H1 (cell line): ENCODE measurements at regions of chr3 and their contacts with region 1.

Region 1: DNA sequence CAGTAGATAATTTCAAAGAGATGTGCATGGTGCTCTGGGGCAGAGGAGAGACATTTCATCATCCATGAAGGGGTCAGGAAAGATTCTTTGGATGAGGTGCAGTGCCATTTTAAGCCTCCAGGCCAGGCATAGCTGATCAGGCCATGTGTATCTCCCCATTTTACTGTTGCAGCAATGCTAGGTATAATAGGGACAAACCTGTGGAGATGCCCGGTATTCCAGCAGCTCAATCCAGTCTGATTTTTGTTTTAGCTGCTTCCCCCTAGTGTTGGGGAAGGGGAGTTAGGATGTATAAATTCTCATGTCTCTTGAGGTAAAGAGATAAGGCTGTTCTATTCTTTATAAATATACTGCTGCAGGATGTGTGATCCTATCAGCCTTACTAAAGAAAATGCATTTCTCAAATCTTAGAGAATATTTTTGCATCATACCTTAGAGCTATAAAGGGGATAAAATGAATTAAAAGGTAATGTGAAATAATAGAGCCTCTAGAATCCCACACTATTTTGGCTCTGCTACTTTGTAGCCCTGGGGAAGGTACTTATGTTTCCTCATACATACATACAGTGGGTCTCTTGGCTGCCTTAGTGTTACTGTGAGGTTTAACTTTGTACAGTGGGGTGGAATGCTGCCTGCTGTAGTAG is 5.2 kb downstream of the CDV3 start:
- DNase-seq: no peak
- H3K4me3 ChIP-seq: no peak overlapping the region
- H3K27ac ChIP-seq: no peak overlapping the region
- H3K4me1 ChIP-seq: peaks cover 0 to 2% (median 0%) of the 10 kb centered on the region in 4 experiments; a peak in 3 of 7 replicates
- H3K27me3 ChIP-seq: no peaks in the 10 kb centered on the region
- CTCF ChIP-seq: peak in 2 of 3 experiments; percentile 57 to 67; a peak in 3 of 4 replicates
- EP300 ChIP-seq: no peak
- POLR2A ChIP-seq: peak in 1 of 2 experiments; percentile 42; a peak in 1 of 3 replicates
- RAD21 ChIP-seq: peak; percentile 52 to 59

Region 2: GRCh38 chr3:133426721-133427120 is 151.9 kb before region 1 on chr3:
- CTCF ChIA-PET with region 1: no interaction called
- POLR2A ChIA-PET with region 1: no interaction called
- DNase-seq: no peak
- H3K4me3 ChIP-seq: no peak overlapping the region
- H3K27ac ChIP-seq: no peak overlapping the region
- H3K4me1 ChIP-seq: no peaks in the 10 kb centered on the region
- H3K27me3 ChIP-seq: no peaks in the 10 kb centered on the region
- CTCF ChIP-seq: no peak
- EP300 ChIP-seq: no peak
- POLR2A ChIP-seq: no peak
- RAD21 ChIP-seq: no peak

Region 3: GRCh38 chr3:133457465-133458067 is 121.1 kb before region 1 on chr3:
- CTCF ChIA-PET with region 1: interaction called, 17 read pairs
- POLR2A ChIA-PET with region 1: interaction called, 8 read pairs
- DNase-seq: no peak
- H3K4me3 ChIP-seq: no peak overlapping the region
- H3K27ac ChIP-seq: no peak overlapping the region
- H3K4me1 ChIP-seq: peaks cover 0 to 10% (median 3%) of the 10 kb centered on the region in 4 experiments; a peak in 2 of 7 replicates
- H3K27me3 ChIP-seq: no peaks in the 10 kb centered on the region
- CTCF ChIP-seq: peak in 2 of 3 experiments; percentile 16 to 25; a peak in 2 of 4 replicates
- EP300 ChIP-seq: no peak
- POLR2A ChIP-seq: no peak
- RAD21 ChIP-seq: peak; percentile 15 to 23; a peak in 2 of 4 replicates

Region 4: DNA sequence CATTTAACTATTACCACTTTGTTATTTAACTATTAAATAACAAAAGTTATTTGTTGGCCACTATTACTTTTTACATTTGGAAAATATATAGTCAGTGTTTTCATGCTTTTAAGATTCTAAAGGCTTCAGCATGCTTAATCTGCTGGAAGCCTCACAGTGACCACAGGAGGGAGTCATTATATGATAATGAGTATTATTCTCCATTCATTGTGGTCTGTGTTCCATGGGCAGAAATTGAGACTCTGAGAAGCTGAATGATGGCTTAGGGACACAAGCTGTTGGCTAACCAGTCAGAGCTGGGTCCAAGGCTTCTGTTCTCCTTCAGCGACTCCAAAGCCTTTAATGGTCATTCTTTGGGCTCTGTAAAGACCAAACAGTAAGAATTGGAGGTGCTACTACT is 114.1 kb before region 1 on chr3:
- CTCF ChIA-PET with region 1: interaction called, 11 read pairs
- POLR2A ChIA-PET with region 1: no interaction called
- DNase-seq: no peak
- H3K4me3 ChIP-seq: no peak overlapping the region
- H3K27ac ChIP-seq: no peak overlapping the region
- H3K4me1 ChIP-seq: peaks cover 0 to 10% (median 3%) of the 10 kb centered on the region in 4 experiments; a peak in 2 of 7 replicates
- H3K27me3 ChIP-seq: no peaks in the 10 kb centered on the region
- CTCF ChIP-seq: no peak
- EP300 ChIP-seq: no peak
- POLR2A ChIP-seq: no peak
- RAD21 ChIP-seq: no peak

Region 5: DNA sequence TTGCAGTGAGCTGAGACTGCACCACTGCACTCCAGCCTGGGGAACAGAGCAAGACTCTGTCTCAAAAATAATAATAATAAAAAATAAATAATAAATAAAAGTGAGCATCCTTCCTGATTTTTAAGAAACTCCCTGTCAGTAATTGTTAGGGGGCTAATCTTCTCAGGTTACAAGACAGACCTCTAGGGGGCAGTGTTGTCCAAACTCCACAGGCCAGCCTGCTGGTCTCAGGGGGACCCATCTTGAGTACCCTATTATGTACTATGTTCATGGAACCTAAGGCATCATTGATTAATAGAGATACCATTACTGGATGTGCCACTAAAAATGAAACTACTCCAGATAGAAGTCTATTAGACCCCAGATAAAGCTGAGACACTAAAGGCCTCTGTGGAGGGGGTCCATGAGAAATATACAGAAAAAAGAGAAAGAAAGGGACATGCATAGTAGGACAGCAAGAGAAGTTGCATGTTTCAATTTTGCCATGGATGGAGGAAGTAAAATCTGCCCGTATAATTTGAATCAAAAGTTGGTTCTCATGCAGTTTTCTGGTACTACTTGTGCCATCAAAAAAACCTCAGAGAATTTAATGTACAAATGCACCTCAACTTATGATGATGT is 90.6 kb before region 1 on chr3:
- CTCF ChIA-PET with region 1: interaction called, 30 read pairs
- POLR2A ChIA-PET with region 1: interaction called, 9 read pairs
- DNase-seq: no peak
- H3K4me3 ChIP-seq: no peak overlapping the region
- H3K27ac ChIP-seq: no peak overlapping the region
- H3K4me1 ChIP-seq: peaks cover 2 to 9% (median 3%) of the 10 kb centered on the region in 4 experiments
- H3K27me3 ChIP-seq: no peaks in the 10 kb centered on the region
- CTCF ChIP-seq: peak; percentile 47 to 57 (median 50)
- EP300 ChIP-seq: no peak
- POLR2A ChIP-seq: no peak
- RAD21 ChIP-seq: peak; percentile 62 to 72

Region 6: GRCh38 chr3:133521946-133522345 is 56.7 kb before region 1 on chr3:
- CTCF ChIA-PET with region 1: interaction called, 11 read pairs
- POLR2A ChIA-PET with region 1: no interaction called
- DNase-seq: no peak
- H3K4me3 ChIP-seq: no peak overlapping the region
- H3K27ac ChIP-seq: no peak overlapping the region
- H3K4me1 ChIP-seq: no peaks in the 10 kb centered on the region
- H3K27me3 ChIP-seq: no peaks in the 10 kb centered on the region
- CTCF ChIP-seq: no peak
- EP300 ChIP-seq: no peak
- POLR2A ChIP-seq: no peak
- RAD21 ChIP-seq: no peak

Region 7: DNA sequence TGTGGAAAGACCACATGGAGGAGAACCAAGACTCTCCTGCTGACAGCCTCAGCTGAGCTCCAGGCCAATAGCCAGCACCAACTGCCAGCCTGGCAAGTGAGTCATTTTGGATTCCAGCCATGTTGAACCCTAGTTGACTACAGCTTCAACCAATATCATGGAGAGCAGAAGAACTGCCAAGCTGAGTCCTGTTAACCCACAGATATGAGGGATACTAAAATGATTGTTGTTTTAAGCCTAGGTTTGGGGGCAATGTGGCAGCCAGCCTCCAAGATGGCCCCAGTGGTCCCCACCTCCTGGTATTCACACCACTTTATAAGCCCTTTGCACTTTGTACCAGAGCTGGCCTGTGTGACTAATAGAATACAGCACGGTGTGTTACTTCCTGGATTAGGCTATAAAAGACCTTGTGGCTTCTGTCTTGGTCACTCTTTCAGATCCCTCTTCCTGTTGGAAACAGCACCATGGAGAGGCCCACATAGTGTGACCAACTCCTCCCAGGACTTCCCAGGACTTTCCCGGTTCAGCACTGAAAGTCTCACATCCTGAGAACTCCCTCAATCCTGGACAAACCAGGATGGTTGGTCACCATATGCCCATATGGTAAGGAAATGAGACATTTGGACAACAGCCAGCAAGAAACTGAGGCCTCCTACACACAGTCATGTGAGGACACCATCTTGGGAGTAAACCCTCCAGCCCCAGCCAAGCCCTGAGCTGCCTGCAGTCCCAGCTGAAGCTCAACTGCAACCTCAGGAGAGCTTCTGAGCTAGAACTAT is 37.6 kb before region 1 on chr3:
- CTCF ChIA-PET with region 1: interaction called, 11 read pairs
- POLR2A ChIA-PET with region 1: interaction called, 3 read pairs
- DNase-seq: no peak
- H3K4me3 ChIP-seq: no peak overlapping the region
- H3K27ac ChIP-seq: no peak overlapping the region
- H3K4me1 ChIP-seq: no peaks in the 10 kb centered on the region
- H3K27me3 ChIP-seq: no peaks in the 10 kb centered on the region
- CTCF ChIP-seq: no peak
- EP300 ChIP-seq: no peak
- POLR2A ChIP-seq: no peak
- RAD21 ChIP-seq: no peak

Region 8: DNA sequence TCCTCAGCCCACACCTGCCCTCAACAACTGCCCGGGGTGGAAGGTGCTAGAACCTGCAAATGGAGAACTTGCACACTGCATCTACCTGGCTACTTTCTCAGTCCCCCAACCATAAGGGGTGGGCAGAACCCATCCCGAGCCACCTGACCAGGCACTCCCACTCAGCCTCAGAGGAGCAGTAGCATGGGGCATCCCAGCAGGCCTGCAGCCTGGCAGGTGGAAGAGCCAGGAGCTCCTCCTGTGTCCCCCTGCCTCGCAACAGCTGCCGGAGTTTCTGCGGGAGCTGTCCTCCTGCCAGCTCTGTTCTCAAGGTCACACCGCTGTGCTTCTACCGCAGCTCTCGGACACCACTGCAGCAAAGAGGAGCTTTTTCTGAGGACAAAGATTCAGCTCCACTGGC is 289.5 kb after region 1 on chr3:
- CTCF ChIA-PET with region 1: no interaction called
- POLR2A ChIA-PET with region 1: no interaction called
- DNase-seq: no peak
- H3K4me3 ChIP-seq: no peak overlapping the region
- H3K27ac ChIP-seq: no peak overlapping the region
- H3K4me1 ChIP-seq: peaks cover 0 to 3% (median 0%) of the 10 kb centered on the region in 4 experiments; a peak in 3 of 7 replicates
- H3K27me3 ChIP-seq: no peaks in the 10 kb centered on the region
- CTCF ChIP-seq: no peak
- EP300 ChIP-seq: no peak
- POLR2A ChIP-seq: no peak
- RAD21 ChIP-seq: no peak